OCI-LY7 (cell line): ENCODE measurements at regions of chr13 and their contacts with region 1.

Region 1: GRCh38 chr13:32246468-32246867 is 68.7 kb downstream of the ZAR1L start:
- DNase-seq: peak; percentile 59
- H3K4me3 ChIP-seq: no peak overlapping the region
- H3K27ac ChIP-seq: no peak overlapping the region
- H3K4me1 ChIP-seq: no peaks in the 10 kb centered on the region
- CTCF ChIP-seq: peak; percentile 77

Region 2: GRCh38 chr13:32228330-32229041 is 18.0 kb before region 1 on chr13:
- CTCF ChIA-PET with region 1: no interaction called
- POLR2A ChIA-PET with region 1: no interaction called
- intact Hi-C with region 1: no loop called
- DNase-seq: no peak
- H3K4me3 ChIP-seq: no peak overlapping the region
- H3K27ac ChIP-seq: no peak overlapping the region
- H3K4me1 ChIP-seq: no peaks in the 10 kb centered on the region
- CTCF ChIP-seq: no peak

Region 3: GRCh38 chr13:32443111-32443510 is 196.6 kb after region 1 on chr13:
- CTCF ChIA-PET with region 1: no interaction called
- POLR2A ChIA-PET with region 1: interaction called, 3 read pairs
- intact Hi-C with region 1: loop called (anchors 10 kb)
- DNase-seq: peak; percentile 53
- H3K4me3 ChIP-seq: no peak overlapping the region
- H3K27ac ChIP-seq: no peak overlapping the region
- H3K4me1 ChIP-seq: no peaks in the 10 kb centered on the region
- CTCF ChIP-seq: peak; percentile 77